ENCODE measurements at regions of chr3 and their contacts with region 1.

Region 1: GRCh38 chr3:153595186-153595815 is 433.3 kb downstream of the RAP2B start:
- DNase-seq: peak; percentile 63
- H3K4me3 Mint-ChIP-seq: no peak overlapping the region
- H3K27ac Mint-ChIP-seq: no peak overlapping the region
- H3K4me1 Mint-ChIP-seq: peaks cover 8% of the 10 kb centered on the region
- H3K27me3 Mint-ChIP-seq: no peaks in the 10 kb centered on the region
- CTCF ChIP-seq: peak; percentile 78

Region 2: DNA sequence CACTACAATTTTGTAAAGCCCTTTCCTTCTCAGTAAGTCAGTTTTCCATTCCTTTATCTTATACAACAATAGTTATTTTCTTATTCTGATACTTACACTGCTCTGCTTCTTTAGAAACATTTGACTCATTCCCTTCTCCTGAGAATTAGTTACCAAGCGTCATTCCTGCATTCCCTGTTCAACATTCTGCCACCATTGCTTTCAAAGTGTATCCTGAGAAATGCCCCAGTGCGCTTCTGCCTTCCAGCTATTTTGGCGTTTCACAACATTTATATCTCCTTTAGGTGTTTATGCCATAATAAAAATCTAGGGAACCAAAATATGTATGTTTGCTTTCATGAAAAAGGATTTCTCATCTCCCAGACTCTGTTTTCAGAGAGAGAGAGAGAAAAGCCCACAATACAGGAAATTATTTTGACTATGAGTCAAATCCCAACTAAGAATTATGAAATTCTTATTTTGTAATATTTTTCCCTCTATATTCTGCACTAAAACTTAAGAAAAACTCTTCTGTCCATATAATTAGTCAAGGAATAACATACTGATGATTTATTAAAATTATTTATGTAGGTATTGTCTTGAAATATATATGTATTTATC is 551.5 kb before region 1 on chr3:
- CTCF ChIA-PET with region 1: interaction called, 6 read pairs
- POLR2A ChIA-PET with region 1: interaction called, 4 read pairs
- intact Hi-C with region 1: loop called (anchors 1 kb)
- DNase-seq: peak; percentile 86
- H3K4me3 Mint-ChIP-seq: peak overlapping the region; percentile 63
- H3K27ac Mint-ChIP-seq: peak overlapping the region; percentile 82
- H3K4me1 Mint-ChIP-seq: peaks cover 8% of the 10 kb centered on the region
- H3K27me3 Mint-ChIP-seq: no peaks in the 10 kb centered on the region
- CTCF ChIP-seq: no peak

Region 3: DNA sequence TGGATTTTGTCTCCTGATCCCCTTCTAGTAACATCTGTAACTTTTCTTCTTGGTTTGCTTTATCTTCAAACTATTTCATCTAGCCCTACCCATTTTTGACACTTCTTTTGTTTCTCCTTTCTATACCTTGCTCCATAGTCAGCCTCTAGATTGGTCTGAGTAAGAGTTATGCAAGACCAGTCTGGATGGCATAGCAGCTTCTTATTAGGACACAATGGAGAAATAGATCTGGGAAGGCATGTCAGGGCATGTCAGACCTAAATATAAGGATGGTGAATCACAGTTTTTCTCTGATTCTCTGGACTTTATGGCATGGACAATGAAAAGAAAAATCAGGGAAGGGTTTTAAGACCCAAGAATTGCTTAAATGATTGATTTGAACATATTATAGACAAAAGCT is 19.3 kb after region 1 on chr3:
- CTCF ChIA-PET with region 1: interaction called, 3 read pairs
- POLR2A ChIA-PET with region 1: interaction called, 11 read pairs
- intact Hi-C with region 1: no loop called
- DNase-seq: peak; percentile 96
- H3K4me3 Mint-ChIP-seq: no peak overlapping the region
- H3K27ac Mint-ChIP-seq: peak overlapping the region; percentile 94
- H3K4me1 Mint-ChIP-seq: peaks cover 15% of the 10 kb centered on the region
- H3K27me3 Mint-ChIP-seq: no peaks in the 10 kb centered on the region
- CTCF ChIP-seq: no peak

Region 4: GRCh38 chr3:153669527-153669926 is 74.2 kb after region 1 on chr3:
- CTCF ChIA-PET with region 1: no interaction called
- POLR2A ChIA-PET with region 1: no interaction called
- intact Hi-C with region 1: no loop called
- DNase-seq: no peak
- H3K4me3 Mint-ChIP-seq: no peak overlapping the region
- H3K27ac Mint-ChIP-seq: no peak overlapping the region
- H3K4me1 Mint-ChIP-seq: no peaks in the 10 kb centered on the region
- H3K27me3 Mint-ChIP-seq: no peaks in the 10 kb centered on the region
- CTCF ChIP-seq: no peak

Region 5: GRCh38 chr3:153927107-153927506 is 331.8 kb after region 1 on chr3:
- CTCF ChIA-PET with region 1: no interaction called
- POLR2A ChIA-PET with region 1: no interaction called
- intact Hi-C with region 1: loop called (anchors 10 kb)
- DNase-seq: peak; percentile 72
- H3K4me3 Mint-ChIP-seq: no peak overlapping the region
- H3K27ac Mint-ChIP-seq: no peak overlapping the region
- H3K4me1 Mint-ChIP-seq: no peaks in the 10 kb centered on the region
- H3K27me3 Mint-ChIP-seq: no peaks in the 10 kb centered on the region
- CTCF ChIP-seq: peak; percentile 11

Measured in MCF 10A (cell line).